GM10248 (cell line): ENCODE measurements at regions of chr1 and their contacts with region 1.

Region 1: GRCh38 chr1:207868774-207869721 is 41.9 kb downstream of the CD34 start:
- DNase-seq: peak; percentile 89
- CTCF ChIP-seq: peak; percentile 95

Region 2: DNA sequence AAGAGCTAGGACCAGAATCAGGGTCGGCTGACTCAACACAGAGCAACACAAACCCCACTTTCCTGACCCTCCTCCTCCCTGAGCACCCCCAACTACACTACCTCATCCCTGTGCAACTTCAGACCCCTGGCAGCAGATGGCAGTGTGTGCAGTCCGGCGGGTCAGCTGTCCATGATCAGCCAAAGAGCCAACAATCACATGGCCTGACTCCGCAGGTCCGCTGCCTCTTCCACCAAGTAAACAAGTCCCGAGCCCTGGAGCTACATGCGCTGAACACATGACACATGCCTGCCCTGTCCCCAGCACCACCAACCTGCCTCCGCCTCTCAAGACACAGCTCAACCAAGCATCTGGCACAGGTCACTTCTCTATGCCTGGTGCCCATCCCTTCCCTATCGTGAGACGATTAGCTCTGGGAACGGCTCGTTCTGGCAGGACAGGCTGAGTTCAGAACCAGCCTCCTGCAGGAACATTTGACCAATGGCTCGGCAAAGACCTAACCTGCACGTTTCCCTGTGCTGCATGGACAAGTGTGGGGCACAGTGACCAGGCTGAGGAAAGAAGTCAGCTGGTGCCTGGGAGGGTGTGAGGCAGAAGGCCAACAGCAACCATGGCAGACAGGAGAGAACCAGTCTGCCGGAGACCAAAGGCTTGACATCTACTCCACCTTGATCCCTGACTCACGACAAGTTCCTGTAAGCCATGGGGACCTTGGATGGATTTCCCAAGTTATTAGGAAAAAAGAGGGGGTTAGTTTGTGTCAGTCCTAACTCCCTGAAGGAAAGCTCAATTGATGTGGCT is 56.9 kb before region 1 on chr1:
- CTCF ChIA-PET with region 1: interaction called, 28 read pairs
- POLR2A ChIA-PET with region 1: no interaction called
- DNase-seq: no peak
- CTCF ChIP-seq: peak; percentile 40

Region 3: GRCh38 chr1:207828485-207829158 is 40.4 kb before region 1 on chr1:
- CTCF ChIA-PET with region 1: interaction called, 661 read pairs
- POLR2A ChIA-PET with region 1: interaction called, 4 read pairs
- DNase-seq: peak; percentile 47
- CTCF ChIP-seq: peak; percentile 81

Region 4: GRCh38 chr1:207897188-207897587 is 28.1 kb after region 1 on chr1:
- CTCF ChIA-PET with region 1: interaction called, 17 read pairs
- POLR2A ChIA-PET with region 1: no interaction called
- DNase-seq: no peak
- CTCF ChIP-seq: no peak

Region 5: GRCh38 chr1:207973898-207974568 is 105.0 kb after region 1 on chr1:
- CTCF ChIA-PET with region 1: interaction called, 12 read pairs
- POLR2A ChIA-PET with region 1: no interaction called
- DNase-seq: peak; percentile 27
- CTCF ChIP-seq: no peak